Mammary epithelial cell (primary cell): ENCODE measurements at regions of chr4 and their contacts with region 1.

Region 1: GRCh38 chr4:186137196-186137794 is 32.8 kb downstream of the FAM149A start:
- DNase-seq: no peak
- H3K4me3 ChIP-seq: no peak overlapping the region
- H3K27ac ChIP-seq: no peak overlapping the region
- H3K4me1 ChIP-seq: no peaks in the 10 kb centered on the region
- H3K27me3 ChIP-seq: no peaks in the 10 kb centered on the region
- CTCF ChIP-seq: peak; percentile 55 to 64

Region 2: DNA sequence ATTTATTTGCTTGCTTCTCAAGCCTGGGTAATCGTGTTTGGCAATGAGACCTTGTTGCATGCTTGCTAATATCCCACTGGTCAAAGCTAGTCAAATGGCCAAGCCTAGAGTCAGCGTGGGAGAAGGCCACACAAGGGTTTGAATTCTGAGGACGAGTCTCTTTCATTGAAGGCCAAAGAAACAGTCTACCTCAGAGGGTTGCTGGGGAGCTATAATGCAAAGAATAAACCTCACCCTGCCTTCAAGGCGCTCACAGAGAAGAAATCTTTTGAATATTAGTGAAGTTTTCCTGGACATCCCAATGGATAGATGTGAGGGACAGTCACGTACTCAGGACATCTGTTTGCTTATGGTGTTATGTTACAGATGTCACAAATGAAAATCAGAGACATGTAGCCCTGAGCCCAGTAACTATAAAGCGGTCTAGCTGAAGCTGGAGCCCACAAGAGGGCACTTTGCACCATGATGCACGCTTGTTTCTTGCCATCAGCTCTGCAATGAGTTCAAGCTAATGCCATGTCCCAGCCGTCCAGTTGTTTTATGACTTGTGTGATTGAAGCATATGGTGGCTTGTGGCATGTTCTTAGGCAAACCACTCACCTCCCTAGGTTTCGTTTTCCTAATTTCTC is 69.4 kb before region 1 on chr4:
- CTCF ChIA-PET with region 1: interaction called, 24 read pairs
- dilution Hi-C with region 1: no loop called
- in situ Hi-C with region 1: no loop called
- intact Hi-C with region 1: loop called (anchors 1 kb)
- DNase-seq: peak; percentile 32
- H3K4me3 ChIP-seq: peak overlapping the region in 1 of 3 experiments; percentile 48
- H3K27ac ChIP-seq: no peak overlapping the region
- H3K4me1 ChIP-seq: peaks cover 10% of the 10 kb centered on the region
- H3K27me3 ChIP-seq: no peaks in the 10 kb centered on the region
- CTCF ChIP-seq: peak; percentile 29 to 62

Region 3: GRCh38 chr4:186169945-186170802 is 32.9 kb after region 1 on chr4:
- CTCF ChIA-PET with region 1: no interaction called
- dilution Hi-C with region 1: no loop called
- in situ Hi-C with region 1: no loop called
- intact Hi-C with region 1: no loop called
- DNase-seq: no peak
- H3K4me3 ChIP-seq: no peak overlapping the region
- H3K27ac ChIP-seq: no peak overlapping the region
- H3K4me1 ChIP-seq: no peaks in the 10 kb centered on the region
- H3K27me3 ChIP-seq: no peaks in the 10 kb centered on the region
- CTCF ChIP-seq: no peak

Region 4: DNA sequence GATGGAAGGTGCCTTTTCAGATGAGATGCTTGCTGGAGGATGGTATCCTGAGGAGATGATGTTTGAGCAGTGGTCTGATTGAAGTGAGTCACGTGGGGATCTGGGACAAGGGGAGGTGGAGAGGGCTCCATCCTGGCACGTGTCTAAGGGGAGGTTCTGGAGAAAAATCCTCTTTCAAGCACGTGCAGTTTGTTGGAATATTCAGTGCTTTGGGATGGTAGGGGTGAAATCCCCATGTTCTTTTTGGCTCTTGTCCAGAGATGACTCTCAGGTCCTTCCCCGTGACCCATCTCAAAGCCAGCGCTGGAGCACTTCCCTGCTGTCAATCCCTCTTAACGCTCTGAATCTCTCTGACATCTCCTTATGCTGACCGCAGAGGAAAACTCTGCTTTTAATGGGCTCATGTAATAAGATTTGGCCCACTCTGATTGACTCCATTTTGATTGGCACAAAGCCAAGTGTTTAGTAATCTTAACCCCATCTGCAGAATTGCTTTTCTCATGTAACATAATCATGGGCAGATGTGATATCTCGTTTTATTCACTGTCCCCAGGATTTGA is 79.2 kb after region 1 on chr4:
- CTCF ChIA-PET with region 1: no interaction called
- dilution Hi-C with region 1: loop called (anchors 5 kb)
- in situ Hi-C with region 1: no loop called
- intact Hi-C with region 1: no loop called
- DNase-seq: no peak
- H3K4me3 ChIP-seq: no peak overlapping the region
- H3K27ac ChIP-seq: no peak overlapping the region
- H3K4me1 ChIP-seq: no peaks in the 10 kb centered on the region
- H3K27me3 ChIP-seq: no peaks in the 10 kb centered on the region
- CTCF ChIP-seq: no peak